Activated CD4-positive, alpha-beta memory T cell treated with anti-CD3 and anti-CD28 coated beads for 36 hours (primary cell): ENCODE measurements at regions of chr5 and their contacts with region 1.

Region 1: GRCh38 chr5:126499853-126500342 is 76.7 kb downstream of the GRAMD2B start:
- DNase-seq: peak; percentile 22
- H3K4me3 Mint-ChIP-seq: no peak overlapping the region
- H3K27ac Mint-ChIP-seq: no peak overlapping the region
- H3K4me1 Mint-ChIP-seq: peaks cover 8% of the 10 kb centered on the region
- H3K27me3 Mint-ChIP-seq: no peaks in the 10 kb centered on the region

Region 2: GRCh38 chr5:126339215-126339805 is 160.6 kb before region 1 on chr5:
- CTCF ChIA-PET with region 1: interaction called, 40 read pairs
- POLR2A ChIA-PET with region 1: no interaction called
- intact Hi-C with region 1: loop called (anchors 1 kb)
- DNase-seq: peak; percentile 29
- H3K4me3 Mint-ChIP-seq: no peak overlapping the region
- H3K27ac Mint-ChIP-seq: no peak overlapping the region
- H3K4me1 Mint-ChIP-seq: no peaks in the 10 kb centered on the region
- H3K27me3 Mint-ChIP-seq: peaks cover 12% of the 10 kb centered on the region

Region 3: DNA sequence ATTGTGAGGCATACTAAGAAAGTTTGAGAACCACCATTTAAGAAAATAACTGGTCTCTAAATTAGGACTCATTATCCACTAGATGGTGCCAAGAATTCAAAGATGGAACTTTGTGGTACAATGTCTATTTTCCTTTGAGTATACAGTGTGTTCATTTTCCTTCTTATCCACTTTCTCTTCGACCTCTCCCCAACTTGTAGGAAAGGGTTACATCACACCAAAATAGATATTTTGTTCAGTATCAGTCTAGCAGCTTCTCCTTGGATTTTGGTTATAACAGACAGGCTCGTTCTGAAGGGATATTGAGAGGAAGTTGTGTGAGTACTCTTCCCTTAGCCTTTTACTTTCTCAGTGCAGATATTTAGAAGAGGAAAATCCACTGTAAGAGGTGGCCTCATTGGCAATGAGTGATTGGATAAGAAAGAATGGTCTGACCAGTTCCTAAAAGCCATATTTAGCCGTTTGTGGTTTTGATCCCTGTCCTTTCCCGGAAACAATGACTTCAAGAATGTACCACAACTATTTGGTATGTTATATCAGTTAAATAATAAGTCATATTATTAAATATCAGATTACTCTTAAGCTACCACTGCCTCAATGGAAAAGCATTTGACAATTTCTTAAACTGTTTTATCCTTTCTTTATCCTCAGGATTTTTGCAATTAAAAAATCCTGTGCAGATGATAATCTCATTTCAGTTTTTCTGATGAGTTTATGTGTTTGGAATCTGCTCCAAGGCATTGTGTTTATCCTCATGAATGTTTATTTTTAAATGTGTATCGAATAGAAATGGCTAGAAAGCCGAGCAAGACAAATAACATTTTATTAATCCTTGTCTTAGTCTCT is 145.7 kb before region 1 on chr5:
- CTCF ChIA-PET with region 1: interaction called, 94 read pairs
- POLR2A ChIA-PET with region 1: no interaction called
- intact Hi-C with region 1: loop called (anchors 1 kb)
- DNase-seq: no peak
- H3K4me3 Mint-ChIP-seq: no peak overlapping the region
- H3K27ac Mint-ChIP-seq: no peak overlapping the region
- H3K4me1 Mint-ChIP-seq: peaks cover 4% of the 10 kb centered on the region
- H3K27me3 Mint-ChIP-seq: peaks cover under 1% of the 10 kb centered on the region

Region 4: GRCh38 chr5:126410623-126411022 is 89.3 kb before region 1 on chr5:
- CTCF ChIA-PET with region 1: no interaction called
- POLR2A ChIA-PET with region 1: no interaction called
- intact Hi-C with region 1: no loop called
- DNase-seq: no peak
- H3K4me3 Mint-ChIP-seq: no peak overlapping the region
- H3K27ac Mint-ChIP-seq: no peak overlapping the region
- H3K4me1 Mint-ChIP-seq: no peaks in the 10 kb centered on the region
- H3K27me3 Mint-ChIP-seq: peaks cover 9% of the 10 kb centered on the region

Region 5: GRCh38 chr5:126422989-126423788 is 76.7 kb before region 1 on chr5 and contains the start of gene GRAMD2B:
- CTCF ChIA-PET with region 1: interaction called, 21 read pairs
- POLR2A ChIA-PET with region 1: interaction called, 6 read pairs
- intact Hi-C with region 1: loop called (anchors 2 kb)
- DNase-seq: peak; percentile 83
- H3K4me3 Mint-ChIP-seq: peak within 1 kb of the TSS; percentile 82
- H3K27ac Mint-ChIP-seq: peak within 1 kb of the TSS; percentile 87
- H3K4me1 Mint-ChIP-seq: peaks cover 38% of the 10 kb centered on the region
- H3K27me3 Mint-ChIP-seq: no peaks in the 10 kb centered on the region
- total RNA-seq, gene GRAMD2B: 9.9 to 10.4 TPM

Region 6: DNA sequence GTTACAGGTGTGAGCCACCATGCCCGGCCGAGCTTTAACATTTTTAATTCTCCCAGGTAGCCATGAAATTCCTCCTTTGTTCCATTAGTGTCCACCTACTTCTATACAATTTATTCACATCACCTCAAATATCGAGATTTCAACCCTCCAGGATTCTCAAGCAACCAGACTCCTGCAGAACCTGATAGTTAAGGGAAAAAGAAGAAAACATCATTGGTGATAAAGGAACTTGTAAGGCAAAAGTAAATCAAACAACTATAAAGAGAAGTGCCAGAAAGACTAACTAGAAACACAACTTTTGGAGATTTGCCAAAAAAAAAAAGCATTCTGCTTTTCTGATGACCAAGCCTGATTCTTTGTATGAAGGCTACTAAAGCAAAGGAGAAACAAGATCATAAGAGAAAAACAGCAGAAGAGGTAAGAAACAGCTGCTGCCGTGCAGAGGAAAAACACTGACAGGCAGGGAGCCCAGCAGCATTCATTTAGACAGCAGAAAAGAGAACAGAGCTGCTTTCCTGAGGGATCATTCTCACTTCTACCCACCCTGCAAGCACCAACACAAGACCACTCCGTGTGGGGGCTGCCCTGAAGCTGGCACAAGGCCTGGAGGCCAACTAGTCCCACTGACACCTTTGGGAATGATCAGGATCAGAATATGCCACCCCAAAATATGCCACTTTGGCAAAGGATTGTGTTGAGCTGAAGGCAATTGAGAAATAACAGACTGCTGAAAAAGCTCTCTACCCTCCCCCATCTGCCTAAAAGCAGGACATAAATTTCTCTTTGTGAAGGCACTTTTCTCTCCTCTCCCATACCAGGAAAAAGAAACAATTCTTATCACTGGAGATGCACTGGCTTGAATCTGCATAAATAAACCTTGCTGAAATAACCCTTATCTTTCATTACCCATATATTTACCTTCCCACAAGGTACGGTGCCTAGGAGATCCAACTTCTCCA is 20.0 kb after region 1 on chr5:
- CTCF ChIA-PET with region 1: interaction called, 12 read pairs
- POLR2A ChIA-PET with region 1: no interaction called
- intact Hi-C with region 1: no loop called
- DNase-seq: no peak
- H3K4me3 Mint-ChIP-seq: no peak overlapping the region
- H3K27ac Mint-ChIP-seq: no peak overlapping the region
- H3K4me1 Mint-ChIP-seq: no peaks in the 10 kb centered on the region
- H3K27me3 Mint-ChIP-seq: peaks cover 2% of the 10 kb centered on the region

Region 7: GRCh38 chr5:126628102-126628501 is 128.2 kb after region 1 on chr5:
- CTCF ChIA-PET with region 1: no interaction called
- POLR2A ChIA-PET with region 1: no interaction called
- intact Hi-C with region 1: no loop called
- DNase-seq: no peak
- H3K4me3 Mint-ChIP-seq: no peak overlapping the region
- H3K27ac Mint-ChIP-seq: no peak overlapping the region
- H3K4me1 Mint-ChIP-seq: peaks cover 10% of the 10 kb centered on the region
- H3K27me3 Mint-ChIP-seq: no peaks in the 10 kb centered on the region